Mammary epithelial cell (primary cell): ENCODE measurements at regions of chr2 and their contacts with region 1.

Region 1: DNA sequence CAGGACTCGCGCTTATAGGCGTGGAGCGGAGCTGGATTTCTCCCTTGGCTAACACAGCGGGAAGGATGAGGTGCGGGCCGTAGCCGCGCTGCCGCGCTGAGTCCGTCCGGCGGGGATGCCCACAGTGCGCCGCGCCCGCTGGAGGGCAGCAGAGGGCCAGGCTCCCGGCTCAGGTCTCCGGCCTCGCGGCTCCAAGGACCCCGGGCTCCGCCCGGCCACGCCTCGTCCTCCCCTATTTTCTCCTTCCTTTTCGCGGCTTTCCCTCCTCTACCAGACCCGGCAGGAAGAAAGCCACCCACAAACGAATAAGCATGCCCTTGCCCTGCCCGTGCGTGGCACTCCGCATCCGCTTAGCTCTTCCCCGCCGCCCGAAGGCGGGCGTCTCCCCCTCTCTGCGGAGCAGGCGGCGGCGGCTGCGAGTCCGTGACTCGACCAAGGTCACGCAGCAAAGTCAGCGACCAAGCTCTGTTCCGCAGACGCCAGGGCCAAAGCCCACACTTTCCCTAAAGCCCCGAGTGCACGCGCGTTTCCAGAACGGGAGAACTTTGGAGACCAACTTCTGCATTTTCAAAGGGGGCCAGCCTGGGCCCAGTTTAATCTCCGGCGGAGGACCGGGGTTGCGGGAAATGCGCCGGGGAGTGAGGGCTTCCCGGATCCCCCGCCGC is 48.6 kb downstream of the KCNIP3 start:
- DNase-seq: peak; percentile 77
- H3K4me3 ChIP-seq: peak overlapping the region; percentile 49 to 69 (median 61)
- H3K27ac ChIP-seq: peak overlapping the region; percentile 10
- H3K4me1 ChIP-seq: peaks cover 41% of the 10 kb centered on the region
- H3K27me3 ChIP-seq: no peaks in the 10 kb centered on the region
- CTCF ChIP-seq: peak; percentile 65 to 91

Region 2: GRCh38 chr2:95053543-95053942 is 292.2 kb before region 1 on chr2:
- CTCF ChIA-PET with region 1: no interaction called
- dilution Hi-C with region 1: no loop called
- in situ Hi-C with region 1: no loop called
- intact Hi-C with region 1: no loop called
- DNase-seq: no peak
- H3K4me3 ChIP-seq: no peak overlapping the region
- H3K27ac ChIP-seq: no peak overlapping the region
- H3K4me1 ChIP-seq: peaks cover 18% of the 10 kb centered on the region
- H3K27me3 ChIP-seq: no peaks in the 10 kb centered on the region
- CTCF ChIP-seq: no peak

Region 3: DNA sequence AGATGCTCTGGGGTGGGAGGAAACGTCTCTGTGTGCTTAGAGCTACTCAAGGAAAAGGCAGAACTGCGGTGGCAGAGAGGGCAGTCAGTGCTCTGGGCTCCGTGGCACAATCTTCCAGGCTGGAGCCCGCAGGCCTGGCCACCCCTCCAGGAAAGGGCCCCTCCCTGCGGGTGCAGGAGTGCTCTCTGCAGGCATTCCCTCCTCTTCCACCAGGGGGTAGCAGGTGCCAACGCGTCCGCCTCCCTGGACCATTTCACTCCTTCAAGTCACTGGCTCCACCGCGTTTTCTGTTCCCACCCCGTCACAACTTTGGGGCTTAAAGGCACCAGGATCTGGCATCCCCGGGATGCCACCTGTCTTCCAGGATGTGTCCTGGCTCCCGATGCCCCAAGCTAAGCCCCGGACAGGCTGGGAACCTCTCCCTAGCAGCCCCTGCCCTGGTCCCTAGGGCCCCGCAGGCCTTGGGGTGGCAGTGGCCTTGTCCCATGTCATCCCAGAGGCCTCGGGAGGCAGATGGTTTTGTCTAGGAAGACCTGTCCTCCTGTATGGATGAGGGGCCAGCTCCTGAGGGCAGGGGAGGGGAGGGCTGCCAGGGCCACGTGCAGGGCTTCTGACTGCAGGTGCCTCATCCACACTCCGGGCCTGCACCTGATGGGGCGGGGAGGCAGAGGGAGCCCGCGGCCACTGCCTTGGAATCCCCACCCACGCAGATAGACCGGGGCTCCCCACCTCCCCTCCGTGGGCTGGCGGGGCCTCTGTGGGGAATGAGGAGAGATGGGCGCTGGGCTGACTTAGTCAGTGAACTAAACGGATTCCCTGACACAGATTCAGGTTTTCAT is 22.1 kb before region 1 on chr2:
- CTCF ChIA-PET with region 1: no interaction called
- dilution Hi-C with region 1: no loop called
- in situ Hi-C with region 1: no loop called
- intact Hi-C with region 1: loop called (anchors 1 kb)
- DNase-seq: peak; percentile 64
- H3K4me3 ChIP-seq: no peak overlapping the region
- H3K27ac ChIP-seq: no peak overlapping the region
- H3K4me1 ChIP-seq: no peaks in the 10 kb centered on the region
- H3K27me3 ChIP-seq: no peaks in the 10 kb centered on the region
- CTCF ChIP-seq: peak; percentile 76 to 91

Region 4: DNA sequence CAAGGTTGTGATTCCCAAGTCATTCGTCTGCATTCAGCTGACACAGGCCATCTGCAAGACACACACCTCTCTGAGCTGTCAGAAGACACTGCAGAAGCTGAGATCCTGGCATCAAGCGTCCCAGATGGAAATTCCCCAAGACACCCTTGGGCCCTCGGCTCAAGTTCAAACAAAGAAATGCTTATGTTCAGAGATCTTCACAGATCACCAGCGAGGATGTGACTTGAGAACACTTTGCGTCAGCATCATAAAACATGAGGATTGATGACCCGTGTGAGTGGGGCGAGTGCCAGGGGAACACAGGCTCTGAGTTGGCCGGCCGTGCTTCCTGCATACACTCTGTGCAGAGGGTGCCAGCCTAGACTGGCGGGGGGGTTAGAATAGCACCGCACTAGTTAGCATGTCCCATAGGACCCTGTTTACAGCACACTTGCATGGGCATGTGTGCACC is 11.8 kb before region 1 on chr2:
- CTCF ChIA-PET with region 1: no interaction called
- dilution Hi-C with region 1: no loop called
- in situ Hi-C with region 1: no loop called
- intact Hi-C with region 1: loop called (anchors 1 kb)
- DNase-seq: peak; percentile 98
- H3K4me3 ChIP-seq: no peak overlapping the region
- H3K27ac ChIP-seq: peak overlapping the region; percentile 56
- H3K4me1 ChIP-seq: peaks cover 38% of the 10 kb centered on the region
- H3K27me3 ChIP-seq: no peaks in the 10 kb centered on the region
- CTCF ChIP-seq: no peak

Region 5: GRCh38 chr2:95389245-95390119 is 43.8 kb after region 1 on chr2:
- CTCF ChIA-PET with region 1: no interaction called
- dilution Hi-C with region 1: no loop called
- in situ Hi-C with region 1: no loop called
- intact Hi-C with region 1: loop called (anchors 5 kb)
- DNase-seq: peak; percentile 38
- H3K4me3 ChIP-seq: no peak overlapping the region
- H3K27ac ChIP-seq: no peak overlapping the region
- H3K4me1 ChIP-seq: no peaks in the 10 kb centered on the region
- H3K27me3 ChIP-seq: no peaks in the 10 kb centered on the region
- CTCF ChIP-seq: peak; percentile 92 to 95

Region 6: GRCh38 chr2:95402370-95403203 is 56.9 kb after region 1 on chr2 and contains the start of gene FAHD2A:
- CTCF ChIA-PET with region 1: no interaction called
- dilution Hi-C with region 1: no loop called
- in situ Hi-C with region 1: no loop called
- intact Hi-C with region 1: loop called (anchors 1 kb)
- DNase-seq: peak; percentile 85
- H3K4me3 ChIP-seq: peak within 1 kb of the TSS; percentile 93 to 99 (median 96)
- H3K27ac ChIP-seq: peak within 1 kb of the TSS; percentile 75
- H3K4me1 ChIP-seq: peaks cover 10% of the 10 kb centered on the region
- H3K27me3 ChIP-seq: no peaks in the 10 kb centered on the region
- CTCF ChIP-seq: no peak
- total RNA-seq, gene FAHD2A: 23.8 to 26.8 TPM

Region 7: DNA sequence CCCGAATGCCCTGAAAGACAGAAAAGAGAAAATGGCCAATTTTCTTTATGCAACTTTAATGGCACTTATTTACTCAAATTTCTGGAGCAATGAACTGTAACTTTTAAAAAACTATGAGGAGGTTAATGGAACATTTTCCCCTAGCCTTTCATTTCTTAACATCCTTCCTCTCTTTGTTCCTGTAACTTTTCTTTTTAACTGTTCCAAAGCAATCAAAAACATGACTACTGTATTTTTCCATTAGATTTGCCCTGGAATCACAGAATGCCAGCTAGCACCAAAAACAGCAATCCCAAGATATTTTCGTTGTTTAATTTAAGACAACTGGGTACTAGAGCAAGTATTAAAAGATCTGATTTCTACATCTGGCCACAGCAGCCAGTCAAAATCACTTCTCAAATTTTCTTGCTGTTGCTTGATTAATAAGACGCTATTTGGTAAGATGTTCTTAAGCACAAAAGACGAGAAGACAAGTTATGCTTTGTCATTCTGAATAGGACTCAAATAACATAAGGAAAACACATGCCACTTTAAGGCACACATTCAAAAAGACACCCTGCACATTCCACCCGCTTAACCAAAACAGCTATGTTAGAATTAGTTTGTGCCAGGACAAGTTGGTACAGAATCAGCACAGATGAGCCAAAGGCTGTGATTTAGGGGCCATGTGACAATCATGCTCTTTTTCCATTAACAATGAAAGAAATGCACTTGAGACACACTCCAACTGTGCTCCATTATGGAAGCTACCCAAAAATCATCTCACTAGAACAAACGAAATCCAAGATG is 859.3 kb after region 1 on chr2:
- CTCF ChIA-PET with region 1: no interaction called
- dilution Hi-C with region 1: no loop called
- in situ Hi-C with region 1: no loop called
- intact Hi-C with region 1: no loop called
- DNase-seq: peak; percentile 34
- H3K4me3 ChIP-seq: peak overlapping the region; percentile 10 to 29 (median 15)
- H3K27ac ChIP-seq: peak overlapping the region; percentile 47
- H3K4me1 ChIP-seq: peaks cover 49% of the 10 kb centered on the region
- H3K27me3 ChIP-seq: no peaks in the 10 kb centered on the region
- CTCF ChIP-seq: no peak